ENCODE measurements at regions of chr3 and their contacts with region 1.

Region 1: DNA sequence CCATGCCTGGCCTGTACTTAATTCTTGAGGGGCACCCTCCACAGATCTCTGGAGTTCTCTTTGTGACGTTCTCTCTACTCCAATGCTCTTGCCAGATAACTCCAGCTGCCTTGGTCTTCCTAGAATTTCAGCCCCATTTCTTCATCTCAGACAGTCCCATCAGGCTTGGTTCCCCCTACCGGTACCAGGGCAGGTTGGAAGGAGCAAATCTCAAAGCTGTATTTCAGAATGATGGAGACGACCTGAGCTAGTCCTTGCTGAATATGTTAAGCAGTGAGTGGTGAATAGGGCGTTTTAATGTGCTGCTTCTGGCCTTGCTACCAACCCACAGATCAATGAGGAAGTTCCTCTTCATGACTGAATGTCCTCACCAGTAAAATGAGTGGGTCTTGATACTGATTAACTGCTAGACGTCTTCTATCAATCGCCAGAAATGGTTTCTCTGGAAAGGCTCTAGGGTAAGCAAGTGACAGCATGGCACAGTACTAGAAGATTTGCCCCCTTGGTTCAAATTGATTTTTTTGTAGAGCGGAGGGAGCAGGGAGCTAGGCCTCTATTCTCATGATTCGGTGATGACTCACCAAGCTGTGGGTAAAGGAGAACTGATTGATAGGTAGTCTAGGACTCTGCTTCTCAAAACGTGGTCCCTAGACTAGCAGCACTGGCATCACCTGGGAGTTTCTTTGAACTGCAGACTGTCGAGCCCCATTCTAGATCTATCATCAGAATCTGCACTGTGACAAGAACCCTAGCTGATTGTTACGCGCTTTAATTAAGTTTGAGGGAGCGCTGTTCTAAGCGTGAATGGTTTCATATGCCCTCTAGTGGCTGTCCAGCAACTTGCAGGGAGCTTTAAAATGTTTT is 67.8 kb downstream of the UBP1 start:
- DNase-seq: peak in 1 of 2 donors; percentile 23
- H3K4me3 ChIP-seq: no peak overlapping the region
- CTCF ChIP-seq: peak in 1 of 3 donors; percentile 63
- POLR2A ChIP-seq: no peak

Region 2: GRCh38 chr3:33128706-33129105 is 243.7 kb before region 1 on chr3:
- intact Hi-C with region 1: loop called (anchors 10 kb)
- DNase-seq: peak in 1 of 2 donors; percentile 8
- H3K4me3 ChIP-seq: no peak overlapping the region
- CTCF ChIP-seq: no peak
- POLR2A ChIP-seq: no peak

Region 3: GRCh38 chr3:33355611-33356010 is 16.8 kb before region 1 on chr3:
- intact Hi-C with region 1: no loop called
- DNase-seq: no peak
- H3K4me3 ChIP-seq: no peak overlapping the region
- CTCF ChIP-seq: no peak
- POLR2A ChIP-seq: no peak

Region 4: GRCh38 chr3:33440323-33441232 is 68.1 kb after region 1 on chr3 and contains the start of gene UBP1:
- intact Hi-C with region 1: no loop called
- DNase-seq: peak; percentile 99 to 100
- H3K4me3 ChIP-seq: peak within 1 kb of the TSS; percentile 97
- CTCF ChIP-seq: no peak
- POLR2A ChIP-seq: no peak
- total RNA-seq, gene UBP1: 27.1 to 51.5 (median 38.8) TPM